ENCODE measurements at regions of chr11 and their contacts with region 1.

Region 1: DNA sequence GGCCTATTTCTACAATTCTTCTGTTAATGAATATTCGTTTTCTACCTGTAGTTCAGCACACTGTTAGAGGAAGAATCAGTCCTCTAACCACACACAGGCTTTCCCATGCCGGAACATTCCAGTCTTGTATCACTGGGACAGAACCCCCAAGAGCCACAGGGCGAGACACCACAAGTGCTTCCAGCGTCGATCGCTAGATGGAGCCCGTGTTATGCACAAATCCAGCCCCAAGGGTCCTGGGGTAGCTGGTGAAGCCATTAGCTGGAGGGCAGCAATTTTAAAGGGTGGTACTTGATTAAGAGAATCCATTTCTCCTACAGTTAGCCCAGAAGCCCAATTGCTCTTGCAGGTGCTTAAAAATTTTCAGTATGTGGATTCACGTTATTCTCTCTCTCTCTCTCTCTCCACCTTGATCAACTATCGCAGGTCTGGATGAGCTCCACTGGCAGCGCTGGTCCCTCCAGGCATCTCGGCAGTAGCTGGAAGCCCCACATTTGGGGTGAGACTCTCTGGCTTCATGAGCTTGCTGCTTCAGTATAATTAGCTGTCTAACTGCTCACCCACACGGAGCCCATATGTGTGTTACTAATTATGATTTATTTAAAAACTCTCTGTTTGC is 148.2 kb upstream of the SNX19 start:
- DNase-seq: no peak
- ATAC-seq: no peak
- H3K4me3 Mint-ChIP-seq: no peak overlapping the region
- H3K27ac Mint-ChIP-seq: no peak overlapping the region
- H3K4me1 Mint-ChIP-seq: no peaks in the 10 kb centered on the region
- H3K27me3 Mint-ChIP-seq: peaks cover 7% of the 10 kb centered on the region
- CTCF ChIP-seq: no peak

Region 2: GRCh38 chr11:131025020-131025419 is 39.5 kb before region 1 on chr11:
- CTCF ChIA-PET with region 1: no interaction called
- POLR2A ChIA-PET with region 1: no interaction called
- intact Hi-C with region 1: no loop called
- DNase-seq: no peak
- ATAC-seq: no peak
- H3K4me3 Mint-ChIP-seq: no peak overlapping the region
- H3K27ac Mint-ChIP-seq: no peak overlapping the region
- H3K4me1 Mint-ChIP-seq: no peaks in the 10 kb centered on the region
- H3K27me3 Mint-ChIP-seq: no peaks in the 10 kb centered on the region
- CTCF ChIP-seq: no peak

Region 3: DNA sequence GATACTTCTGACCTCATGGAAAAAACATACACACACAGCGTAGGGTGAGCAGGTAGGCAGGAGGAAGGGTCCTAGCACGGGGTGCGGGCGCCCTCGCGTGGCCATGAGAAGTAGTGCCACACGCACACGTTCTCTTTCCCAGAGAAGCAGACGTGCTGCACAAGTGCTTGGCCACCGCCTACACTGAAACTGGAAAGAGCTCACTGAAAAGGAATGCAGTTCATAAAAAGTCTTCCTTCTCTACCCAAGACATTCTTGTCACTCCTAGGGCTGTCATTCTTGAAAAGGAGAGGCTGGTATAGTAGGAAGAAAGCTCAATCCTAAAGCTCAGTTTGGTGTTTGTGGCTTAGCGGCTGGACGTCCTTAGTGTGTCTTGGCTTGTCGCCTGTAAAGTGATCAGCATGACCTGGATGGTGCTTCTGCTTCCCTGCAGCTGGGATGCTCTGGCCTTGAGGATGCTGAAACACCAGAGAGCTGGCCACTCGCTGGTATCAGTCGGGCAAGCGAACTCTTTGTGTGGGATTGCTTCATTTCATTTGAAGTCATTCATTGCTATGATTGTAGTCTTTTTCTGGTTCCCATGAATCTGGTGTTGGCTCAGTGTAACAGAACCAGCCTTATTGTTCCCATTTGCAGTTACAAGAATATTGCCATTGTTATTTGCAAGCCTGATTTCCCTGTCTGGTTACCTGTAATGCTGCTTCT is 609.7 kb after region 1 on chr11:
- CTCF ChIA-PET with region 1: interaction called, 10 read pairs
- POLR2A ChIA-PET with region 1: no interaction called
- intact Hi-C with region 1: no loop called
- DNase-seq: no peak
- ATAC-seq: no peak
- H3K4me3 Mint-ChIP-seq: no peak overlapping the region
- H3K27ac Mint-ChIP-seq: no peak overlapping the region
- H3K4me1 Mint-ChIP-seq: no peaks in the 10 kb centered on the region
- H3K27me3 Mint-ChIP-seq: no peaks in the 10 kb centered on the region
- CTCF ChIP-seq: peak; percentile 38

Measured in activated B cell treated with CpG ODN at 0.5 μM for 24 hours (primary cell).